ENCODE measurements at regions of chr15 and their contacts with region 1.

Region 1: GRCh38 chr15:49145651-49146609 is 9.5 kb downstream of the COPS2 start:
- DNase-seq: peak; percentile 65 to 78 (median 74)
- H3K4me3 ChIP-seq: no peak overlapping the region
- H3K27ac ChIP-seq: no peak overlapping the region
- H3K4me1 ChIP-seq: peaks cover 0 to 9% (median 2%) of the 10 kb centered on the region in 4 experiments
- H3K27me3 ChIP-seq: no peaks in the 10 kb centered on the region

Region 2: DNA sequence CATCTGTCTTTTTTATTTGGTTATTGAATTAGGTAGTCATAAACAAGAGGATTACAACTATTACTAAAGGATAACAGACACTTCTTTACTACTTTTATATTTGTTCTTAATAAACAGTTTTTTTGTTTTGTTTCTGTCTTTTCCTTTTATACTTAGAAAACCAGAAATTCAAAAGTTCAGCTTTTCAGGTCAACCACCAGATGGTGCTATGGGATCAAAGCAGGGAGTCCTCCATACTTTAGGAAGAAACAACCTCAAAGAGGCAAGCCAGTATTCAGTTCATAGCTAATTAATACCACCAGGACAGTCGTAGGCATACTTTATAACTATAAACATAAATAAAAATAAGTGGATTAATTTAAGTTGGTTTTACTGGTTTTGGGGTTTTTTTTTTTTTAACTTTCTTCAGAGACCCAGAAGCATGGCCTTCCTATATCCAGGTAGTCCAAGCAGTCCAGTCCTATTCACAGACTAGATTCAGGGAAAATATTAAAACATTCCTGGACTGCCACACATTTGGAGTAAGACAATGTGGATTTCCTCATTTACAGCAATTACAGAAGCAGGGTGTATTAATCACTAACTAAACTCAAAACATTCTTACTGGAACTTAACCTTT is 284.0 kb before region 1 on chr15:
- CTCF ChIA-PET with region 1: interaction called, 26 read pairs
- POLR2A ChIA-PET with region 1: no interaction called
- DNase-seq: peak; percentile 81 to 89 (median 88)
- H3K4me3 ChIP-seq: no peak overlapping the region
- H3K27ac ChIP-seq: no peak overlapping the region
- H3K4me1 ChIP-seq: peaks cover 2 to 21% (median 12%) of the 10 kb centered on the region in 4 experiments
- H3K27me3 ChIP-seq: no peaks in the 10 kb centered on the region

Region 3: GRCh38 chr15:49122541-49123062 is 23.3 kb before region 1 on chr15:
- CTCF ChIA-PET with region 1: interaction called, 10 read pairs
- POLR2A ChIA-PET with region 1: no interaction called
- DNase-seq: no peak
- H3K4me3 ChIP-seq: no peak overlapping the region
- H3K27ac ChIP-seq: no peak overlapping the region
- H3K4me1 ChIP-seq: no peaks in the 10 kb centered on the region
- H3K27me3 ChIP-seq: no peaks in the 10 kb centered on the region

Region 4: DNA sequence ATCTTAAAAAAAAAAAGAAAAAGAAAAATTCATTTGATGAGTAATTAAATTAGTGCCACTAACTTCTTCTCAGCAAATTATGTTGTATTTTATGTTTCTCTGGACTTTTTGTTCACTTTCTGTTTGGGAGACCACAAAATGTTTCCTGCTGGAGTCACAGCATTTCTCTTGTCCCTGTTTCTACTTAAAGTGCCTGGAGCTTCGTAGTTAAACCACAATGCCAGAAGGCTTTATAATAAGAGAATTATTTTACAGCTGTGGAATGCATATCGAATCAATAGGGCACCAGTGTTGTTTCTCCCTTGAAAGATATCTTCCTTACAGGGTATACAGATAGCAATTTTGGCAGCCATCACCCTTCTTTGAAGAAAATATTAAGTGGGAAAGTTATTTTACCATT is 478.1 kb after region 1 on chr15:
- CTCF ChIA-PET with region 1: no interaction called
- POLR2A ChIA-PET with region 1: interaction called, 12 read pairs
- DNase-seq: peak; percentile 16 to 62 (median 54)
- H3K4me3 ChIP-seq: peak overlapping the region in 4 of 7 experiments; percentile 25 to 49 (median 28)
- H3K27ac ChIP-seq: peak overlapping the region; percentile 13 to 60
- H3K4me1 ChIP-seq: peaks cover 11 to 31% (median 20%) of the 10 kb centered on the region in 4 experiments
- H3K27me3 ChIP-seq: no peaks in the 10 kb centered on the region